MCF 10A (cell line): ENCODE measurements at regions of chr1 and their contacts with region 1.

Region 1: GRCh38 chr1:160031365-160032164 is at the start of gene PIGM:
- DNase-seq: peak; percentile 99
- H3K4me3 Mint-ChIP-seq: peak within 1 kb of the TSS; percentile 80
- H3K27ac Mint-ChIP-seq: peak within 1 kb of the TSS; percentile 60
- H3K4me1 Mint-ChIP-seq: peaks cover 24% of the 10 kb centered on the region
- H3K27me3 Mint-ChIP-seq: no peaks in the 10 kb centered on the region
- CTCF ChIP-seq: no peak
- total RNA-seq, gene PIGM: 7.7 and 10.1 TPM in 2 replicates

Region 2: DNA sequence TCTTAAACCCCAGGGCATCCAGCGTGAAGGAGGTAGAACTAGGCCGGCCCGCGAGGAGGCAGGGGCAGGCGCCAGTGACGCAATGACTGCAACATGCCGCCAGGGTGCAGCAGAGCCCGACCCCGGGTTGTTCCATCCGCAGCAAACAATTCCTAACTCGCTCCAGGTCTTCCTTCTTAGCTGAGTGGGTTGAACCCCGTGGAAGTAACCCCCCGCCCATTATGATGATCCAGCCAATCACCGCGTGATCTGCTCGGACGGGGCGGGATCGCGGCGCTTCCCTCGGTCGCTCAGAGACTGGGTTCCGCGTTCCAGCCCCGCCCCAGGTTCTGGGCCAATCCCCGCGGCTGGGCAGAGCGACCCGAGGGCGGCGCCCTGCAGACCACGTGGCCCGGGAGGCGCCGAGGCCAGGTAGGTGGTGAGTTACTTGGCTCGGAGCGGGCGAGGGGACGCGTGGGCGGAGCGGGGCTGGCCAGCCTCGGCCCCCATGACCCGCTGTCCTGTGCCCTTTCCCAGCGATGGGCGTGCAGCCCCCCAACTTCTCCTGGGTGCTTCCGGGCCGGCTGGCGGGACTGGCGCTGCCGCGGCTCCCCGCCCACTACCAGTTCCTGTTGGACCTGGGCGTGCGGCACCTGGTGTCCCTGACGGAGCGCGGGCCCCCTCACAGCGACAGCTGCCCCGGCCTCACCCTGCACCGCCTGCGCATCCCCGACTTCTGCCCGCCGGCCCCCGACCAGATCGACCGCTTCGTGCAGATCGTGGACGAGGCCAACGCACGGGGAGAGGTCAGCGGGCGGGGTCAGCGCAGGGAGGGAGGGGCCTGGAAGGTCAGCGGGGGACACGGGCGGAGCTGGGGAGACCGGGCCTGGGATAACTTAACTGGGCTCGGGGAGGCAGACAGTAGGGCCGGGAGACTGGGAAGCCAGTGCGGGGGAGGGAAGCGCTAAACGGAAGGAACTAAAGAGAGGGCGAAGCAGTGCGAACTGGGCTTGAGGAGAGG is 250.7 kb before region 1 on chr1 and contains the start of gene DUSP23:
- CTCF ChIA-PET with region 1: interaction called, 4 read pairs
- POLR2A ChIA-PET with region 1: interaction called, 17 read pairs
- intact Hi-C with region 1: no loop called
- DNase-seq: peak; percentile 100
- H3K4me3 Mint-ChIP-seq: peak within 1 kb of the TSS; percentile 87
- H3K27ac Mint-ChIP-seq: peak within 1 kb of the TSS; percentile 71
- H3K4me1 Mint-ChIP-seq: peaks cover 65% of the 10 kb centered on the region
- H3K27me3 Mint-ChIP-seq: no peaks in the 10 kb centered on the region
- CTCF ChIP-seq: peak; percentile 97
- total RNA-seq, gene DUSP23: 119 and 178 TPM in 2 replicates

Region 3: DNA sequence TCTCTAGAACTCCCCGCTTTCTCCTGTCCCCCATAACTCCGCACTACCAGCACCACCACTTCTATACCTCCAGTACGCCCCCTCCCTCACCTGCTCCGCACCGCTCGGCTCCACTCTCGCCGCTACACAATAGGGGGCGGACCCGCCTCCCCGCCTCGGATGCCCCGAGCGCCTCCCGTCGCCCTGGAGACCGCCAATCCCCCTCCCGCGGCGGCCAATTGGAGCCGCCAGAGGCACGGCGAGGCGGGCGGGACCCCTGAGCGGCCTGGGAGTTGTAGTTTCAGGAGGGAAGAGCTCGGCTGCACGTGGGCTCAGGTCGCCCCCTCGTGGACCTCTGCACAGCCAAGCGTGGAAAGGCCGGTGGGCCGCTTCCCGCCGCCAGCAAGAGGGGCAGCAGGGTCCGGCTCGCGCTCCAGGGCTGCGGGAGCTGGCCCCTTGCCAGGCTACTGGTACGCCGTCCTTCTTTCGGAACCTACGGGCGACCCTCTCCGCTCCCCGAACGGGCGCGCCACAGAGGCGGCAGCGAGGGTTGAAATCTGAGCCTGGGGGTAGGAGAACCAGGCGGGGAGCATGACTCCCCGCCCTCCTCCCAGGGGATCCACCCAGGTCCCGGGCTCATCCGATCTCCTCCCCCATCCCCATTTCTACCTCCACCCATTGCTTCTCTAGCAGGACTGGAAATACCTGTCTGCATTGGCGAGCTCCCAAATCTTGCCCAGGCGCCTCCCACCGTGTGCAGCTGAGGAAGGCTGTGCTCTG is 85.9 kb before region 1 on chr1 and contains the start of gene IGSF9:
- CTCF ChIA-PET with region 1: interaction called, 3 read pairs
- POLR2A ChIA-PET with region 1: interaction called, 11 read pairs
- intact Hi-C with region 1: no loop called
- DNase-seq: peak; percentile 86
- H3K4me3 Mint-ChIP-seq: peak within 1 kb of the TSS; percentile 69
- H3K27ac Mint-ChIP-seq: no peak within 1 kb of the TSS
- H3K4me1 Mint-ChIP-seq: peaks cover 45% of the 10 kb centered on the region
- H3K27me3 Mint-ChIP-seq: no peaks in the 10 kb centered on the region
- CTCF ChIP-seq: peak; percentile 37
- total RNA-seq, gene IGSF9: 0.25 and 0.44 TPM in 2 replicates

Region 4: GRCh38 chr1:160046494-160047110 is 15.0 kb after region 1 on chr1:
- CTCF ChIA-PET with region 1: interaction called, 70 read pairs
- POLR2A ChIA-PET with region 1: interaction called, 49 read pairs
- intact Hi-C with region 1: no loop called
- DNase-seq: peak; percentile 73
- H3K4me3 Mint-ChIP-seq: no peak overlapping the region
- H3K27ac Mint-ChIP-seq: no peak overlapping the region
- H3K4me1 Mint-ChIP-seq: peaks cover 16% of the 10 kb centered on the region
- H3K27me3 Mint-ChIP-seq: peaks cover 63% of the 10 kb centered on the region
- CTCF ChIP-seq: peak; percentile 83

Region 5: DNA sequence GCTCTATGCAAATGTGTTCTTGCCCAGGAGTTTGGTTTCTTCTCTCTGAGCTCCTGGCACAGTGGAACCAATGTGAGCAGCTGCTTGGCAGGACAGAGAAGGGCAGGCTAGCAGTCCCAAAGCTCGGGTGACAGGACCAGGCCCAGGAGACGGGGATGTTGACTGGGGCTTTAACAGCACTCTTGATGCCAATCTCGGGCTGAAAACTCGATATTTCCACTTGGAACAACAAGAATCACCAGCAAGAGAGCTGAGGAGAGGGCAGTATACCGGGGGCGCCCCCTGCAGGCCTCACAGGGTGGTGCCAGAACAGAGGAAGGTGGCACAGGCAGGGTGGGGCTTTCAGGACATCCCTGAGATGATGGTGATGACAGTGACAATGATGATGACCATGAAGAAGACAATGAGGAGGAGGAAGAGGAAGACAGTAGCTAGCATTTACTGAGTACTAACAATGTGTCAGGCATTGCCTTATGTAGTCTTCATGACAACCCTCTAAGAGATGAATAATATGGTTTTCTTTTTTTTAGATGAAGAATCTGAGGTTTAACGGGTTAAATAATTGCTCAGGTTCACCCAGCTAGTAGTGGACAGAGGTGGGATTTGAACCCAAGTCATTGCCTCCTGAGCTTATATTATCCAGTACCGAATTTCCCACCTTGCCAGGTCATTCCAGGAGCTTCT is 47.1 kb after region 1 on chr1:
- CTCF ChIA-PET with region 1: interaction called, 1,546 read pairs
- POLR2A ChIA-PET with region 1: interaction called, 16 read pairs
- intact Hi-C with region 1: no loop called
- DNase-seq: peak; percentile 67
- H3K4me3 Mint-ChIP-seq: no peak overlapping the region
- H3K27ac Mint-ChIP-seq: no peak overlapping the region
- H3K4me1 Mint-ChIP-seq: no peaks in the 10 kb centered on the region
- H3K27me3 Mint-ChIP-seq: peaks cover 64% of the 10 kb centered on the region
- CTCF ChIP-seq: peak; percentile 98

Region 6: DNA sequence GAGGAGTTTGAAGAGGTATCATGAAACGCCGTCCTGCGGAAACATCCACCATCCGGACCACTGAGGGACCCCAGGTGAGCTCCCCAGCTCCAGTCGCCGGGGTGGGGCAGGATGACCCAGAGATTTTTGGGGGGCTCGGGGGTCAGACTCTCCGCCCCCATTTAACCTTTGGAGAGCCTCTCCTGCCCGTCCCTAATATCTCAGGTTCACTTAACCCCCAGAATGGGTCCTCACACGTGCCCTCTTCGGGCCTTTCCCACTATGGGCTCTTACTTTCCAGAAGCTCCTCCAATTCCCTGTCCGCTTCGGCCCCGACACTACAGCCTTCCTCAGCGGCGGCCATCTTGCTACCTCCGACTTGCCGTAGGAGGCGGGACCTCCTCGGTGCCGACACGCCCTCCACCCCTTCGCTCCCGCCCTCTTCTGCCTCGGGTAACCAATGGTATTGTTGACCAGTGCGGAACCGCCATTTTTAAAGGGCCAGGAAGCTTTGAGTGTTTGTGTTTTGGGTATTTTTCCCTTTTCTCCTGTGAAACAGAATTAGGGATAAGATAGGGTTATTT is 253.3 kb after region 1 on chr1 and contains the start of gene PEX19:
- CTCF ChIA-PET with region 1: no interaction called
- POLR2A ChIA-PET with region 1: interaction called, 18 read pairs
- intact Hi-C with region 1: no loop called
- DNase-seq: peak; percentile 97
- H3K4me3 Mint-ChIP-seq: peak within 1 kb of the TSS; percentile 100
- H3K27ac Mint-ChIP-seq: peak within 1 kb of the TSS; percentile 99
- H3K4me1 Mint-ChIP-seq: peaks cover 19% of the 10 kb centered on the region
- H3K27me3 Mint-ChIP-seq: no peaks in the 10 kb centered on the region
- CTCF ChIP-seq: no peak
- total RNA-seq, gene PEX19: 61.2 and 73.2 TPM in 2 replicates